Transverse colon (tissue), 4 donors: ENCODE measurements at regions of chr3 and their contacts with region 1.

Region 1: DNA sequence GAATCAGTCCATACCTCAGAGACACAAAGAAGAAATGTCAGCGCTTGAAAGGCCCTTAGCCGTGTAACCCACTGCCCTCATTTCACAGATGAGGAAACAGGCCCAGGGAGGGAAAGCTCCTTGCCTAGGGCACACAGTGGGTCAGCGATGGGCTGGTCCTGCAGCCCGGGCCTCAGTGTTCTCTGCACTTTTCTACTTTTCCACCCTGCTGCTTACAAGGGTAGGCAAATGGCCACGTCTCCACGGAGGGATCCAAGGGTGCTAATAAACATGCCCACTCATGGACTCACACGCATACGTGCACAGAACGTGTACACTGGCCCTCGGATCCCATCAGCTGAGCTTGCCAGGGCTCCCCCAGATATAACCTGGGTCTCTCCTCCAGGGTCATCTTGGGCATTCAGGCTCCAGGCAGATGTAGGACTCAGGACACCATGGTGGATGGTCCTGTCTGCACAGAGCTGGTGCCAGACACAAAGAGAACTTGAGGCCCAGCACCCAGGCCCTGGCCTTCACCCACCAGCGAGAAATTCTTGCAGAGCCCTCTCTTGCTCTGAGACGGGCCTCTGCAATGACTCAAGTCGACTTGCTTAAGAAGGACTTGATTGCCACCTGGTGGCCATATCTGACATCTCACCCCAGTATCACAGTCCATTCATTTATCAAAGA is 34.5 kb upstream of the VPS8 start:
- DNase-seq: peak; percentile 94
- H3K4me3 ChIP-seq: no peak overlapping the region
- H3K27ac ChIP-seq: no peak overlapping the region
- H3K4me1 ChIP-seq: peaks cover 0 to 3% (median 0%) of the 10 kb centered on the region in 4 donors
- H3K27me3 ChIP-seq: no peaks in the 10 kb centered on the region
- CTCF ChIP-seq: peak; percentile 80 to 96 (median 87)
- EP300 ChIP-seq: no peak
- POLR2A ChIP-seq: no peak

Region 2: GRCh38 chr3:184362668-184363540 is 414.6 kb before region 1 on chr3:
- in situ Hi-C with region 1: loop called in 1 of 4 experiments (anchors 25 kb)
- intact Hi-C with region 1: no loop called
- DNase-seq: peak; percentile 98
- H3K4me3 ChIP-seq: peak overlapping the region; percentile 44 to 95 (median 86)
- H3K27ac ChIP-seq: peak overlapping the region; percentile 94 to 100 (median 97)
- H3K4me1 ChIP-seq: peaks cover 7 to 38% (median 29%) of the 10 kb centered on the region in 4 donors
- H3K27me3 ChIP-seq: no peaks in the 10 kb centered on the region
- CTCF ChIP-seq: peak; percentile 38 to 68 (median 47)
- EP300 ChIP-seq: peak; percentile 66
- POLR2A ChIP-seq: peak; percentile 80

Region 3: GRCh38 chr3:184380191-184380626 is 397.3 kb before region 1 on chr3:
- in situ Hi-C with region 1: loop called in 1 of 4 experiments (anchors 25 kb)
- intact Hi-C with region 1: loop called (anchors 10 kb)
- DNase-seq: peak; percentile 65
- H3K4me3 ChIP-seq: peak overlapping the region in 3 of 4 donors; percentile 42 to 45 (median 44)
- H3K27ac ChIP-seq: peak overlapping the region in 3 of 4 donors; percentile 36 to 63 (median 43)
- H3K4me1 ChIP-seq: peaks cover 12 to 29% (median 14%) of the 10 kb centered on the region in 4 donors
- H3K27me3 ChIP-seq: peaks cover 63% of the 10 kb centered on the region
- CTCF ChIP-seq: no peak
- EP300 ChIP-seq: no peak
- POLR2A ChIP-seq: no peak

Region 4: DNA sequence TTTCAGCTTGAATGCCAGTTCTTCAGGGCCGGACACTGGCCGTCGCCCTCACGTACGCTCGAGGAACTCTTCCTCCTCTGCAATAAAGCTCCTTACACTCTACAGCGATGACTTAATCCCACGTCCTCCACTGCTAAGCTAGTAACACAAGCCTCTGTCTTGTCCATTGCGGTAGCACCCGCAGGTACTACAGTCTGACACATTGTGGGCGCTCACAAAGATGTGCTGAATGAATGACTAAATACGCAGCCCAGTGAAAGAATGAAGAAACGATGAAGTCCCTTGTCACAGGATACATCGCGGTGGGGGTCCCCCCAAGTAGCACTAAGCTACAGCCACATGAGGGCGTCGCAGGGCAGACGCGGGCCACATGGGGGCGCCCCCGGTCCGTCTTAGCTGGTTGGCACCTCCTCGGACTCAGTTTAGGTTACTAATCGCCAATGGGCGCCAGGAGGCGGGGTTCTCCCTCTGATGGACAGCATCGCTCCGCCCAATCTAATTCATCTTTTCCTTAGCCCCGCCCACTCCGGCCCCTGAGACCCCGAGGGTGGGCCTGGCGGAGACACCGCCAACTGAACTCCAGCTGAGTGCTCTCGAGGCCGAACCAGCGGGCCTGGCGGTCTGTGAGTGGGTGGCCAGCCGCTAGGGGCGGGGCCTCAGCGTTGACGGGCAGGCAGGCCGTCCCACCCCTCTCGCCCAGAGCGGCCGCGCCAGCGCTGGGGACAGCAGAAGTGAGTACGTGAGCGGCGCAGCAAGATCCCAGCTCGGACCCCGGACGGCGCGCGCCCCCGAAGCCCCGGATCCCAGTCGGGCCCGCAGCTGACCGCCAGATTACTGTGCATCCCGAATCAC is 216.2 kb before region 1 on chr3 and contains the start of gene EPHB3:
- in situ Hi-C with region 1: no loop called
- intact Hi-C with region 1: loop called (anchors 1 kb)
- DNase-seq: peak; percentile 99
- H3K4me3 ChIP-seq: peak within 1 kb of the TSS; percentile 61 to 77 (median 69)
- H3K27ac ChIP-seq: peak within 1 kb of the TSS; percentile 76 to 88 (median 83)
- H3K4me1 ChIP-seq: peaks cover 17 to 68% (median 46%) of the 10 kb centered on the region in 4 donors
- H3K27me3 ChIP-seq: no peaks in the 10 kb centered on the region
- CTCF ChIP-seq: peak; percentile 94 to 100 (median 98)
- EP300 ChIP-seq: no peak
- POLR2A ChIP-seq: peak; percentile 95
- total RNA-seq, gene EPHB3: 4.1 to 17.7 (median 6.7) TPM

Region 5: DNA sequence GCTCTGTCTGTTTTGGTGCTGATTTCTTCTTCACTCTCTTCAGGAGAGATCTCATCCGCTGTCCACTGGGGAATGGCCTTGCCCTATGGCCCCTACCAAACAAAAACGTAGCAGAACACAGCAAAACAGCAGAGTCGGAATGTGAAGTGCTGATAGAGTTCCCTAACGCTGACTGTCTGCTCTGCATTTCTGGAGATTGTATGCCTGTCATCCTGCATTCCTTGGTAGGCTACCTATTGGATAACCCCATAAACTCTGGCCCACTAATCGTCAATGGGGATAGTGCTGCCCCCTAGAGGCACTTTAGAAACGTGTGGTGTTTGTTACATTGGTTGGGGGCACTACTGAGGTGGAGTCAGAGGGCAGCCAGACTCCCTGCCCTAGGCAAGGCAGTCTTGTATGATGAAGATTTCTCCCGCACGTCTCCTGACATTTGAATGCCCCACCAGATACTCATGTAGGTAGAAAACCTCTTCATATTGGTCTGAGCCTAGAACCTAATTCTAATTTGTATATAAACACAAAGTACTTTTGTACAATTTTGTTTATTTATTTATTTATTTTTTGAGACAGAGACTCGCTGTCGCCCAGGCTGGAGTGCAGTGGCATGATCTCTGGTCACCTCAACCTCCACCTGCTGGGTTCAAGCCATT is 50.0 kb before region 1 on chr3:
- in situ Hi-C with region 1: no loop called
- intact Hi-C with region 1: loop called (anchors 5 kb)
- DNase-seq: peak; percentile 65
- H3K4me3 ChIP-seq: no peak overlapping the region
- H3K27ac ChIP-seq: no peak overlapping the region
- H3K4me1 ChIP-seq: no peaks in the 10 kb centered on the region
- H3K27me3 ChIP-seq: no peaks in the 10 kb centered on the region
- CTCF ChIP-seq: peak; percentile 68 to 74 (median 72)
- EP300 ChIP-seq: no peak
- POLR2A ChIP-seq: no peak

Region 6: DNA sequence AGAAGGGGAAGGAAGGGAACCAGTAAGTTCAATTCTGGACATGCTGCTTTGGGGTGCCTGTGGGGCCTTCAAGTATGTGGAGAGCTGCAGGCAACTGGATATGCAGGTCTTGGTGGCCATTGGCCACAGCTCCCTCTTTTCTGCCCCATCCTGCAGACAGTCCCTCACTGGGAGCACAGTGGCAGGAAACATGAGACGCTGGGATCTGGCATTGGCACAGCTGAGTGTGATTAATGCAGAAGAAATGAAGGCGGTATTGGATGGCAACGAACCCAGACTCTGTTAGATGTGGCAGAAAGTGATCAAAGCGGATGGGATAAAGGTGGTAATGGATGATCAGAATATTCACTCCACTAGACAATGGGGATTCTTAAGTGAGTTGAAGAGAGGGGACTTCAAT is 11.3 kb after region 1 on chr3:
- in situ Hi-C with region 1: no loop called
- intact Hi-C with region 1: no loop called
- DNase-seq: no peak
- H3K4me3 ChIP-seq: no peak overlapping the region
- H3K27ac ChIP-seq: no peak overlapping the region
- H3K4me1 ChIP-seq: peaks cover 0 to 13% (median 12%) of the 10 kb centered on the region in 4 donors
- H3K27me3 ChIP-seq: no peaks in the 10 kb centered on the region
- CTCF ChIP-seq: no peak
- EP300 ChIP-seq: no peak
- POLR2A ChIP-seq: no peak